Naive thymus-derived CD4-positive, alpha-beta T cell (primary cell): ENCODE measurements at regions of chr16 and their contacts with region 1.

Region 1: GRCh38 chr16:81366316-81366932 is 51.7 kb downstream of the GAN start:
- DNase-seq: peak in 7 of 9 donors; percentile 20 to 62 (median 52)
- ATAC-seq: peak; percentile 86
- H3K4me3 ChIP-seq: no peak overlapping the region
- H3K4me3 Mint-ChIP-seq: no peak overlapping the region
- H3K27ac ChIP-seq: no peak overlapping the region
- H3K27ac Mint-ChIP-seq: no peak overlapping the region
- H3K4me1 ChIP-seq: no peaks in the 10 kb centered on the region
- H3K4me1 Mint-ChIP-seq: peaks cover 0 to 3% (median 0%) of the 10 kb centered on the region in 7 donors
- H3K27me3 ChIP-seq: no peaks in the 10 kb centered on the region
- H3K27me3 Mint-ChIP-seq: no peaks in the 10 kb centered on the region

Region 2: GRCh38 chr16:80500526-80500925 is 865.9 kb before region 1 on chr16:
- CTCF ChIA-PET with region 1: no interaction called
- POLR2A ChIA-PET with region 1: no interaction called
- intact Hi-C with region 1: no loop called
- DNase-seq: no peak
- ATAC-seq: no peak
- H3K4me3 ChIP-seq: no peak overlapping the region
- H3K4me3 Mint-ChIP-seq: no peak overlapping the region
- H3K27ac ChIP-seq: no peak overlapping the region
- H3K27ac Mint-ChIP-seq: no peak overlapping the region
- H3K4me1 ChIP-seq: no peaks in the 10 kb centered on the region
- H3K4me1 Mint-ChIP-seq: peaks cover 0 to 9% (median 3%) of the 10 kb centered on the region in 7 donors
- H3K27me3 ChIP-seq: no peaks in the 10 kb centered on the region
- H3K27me3 Mint-ChIP-seq: peaks cover 0 to 14% (median 0%) of the 10 kb centered on the region in 5 donors

Region 3: DNA sequence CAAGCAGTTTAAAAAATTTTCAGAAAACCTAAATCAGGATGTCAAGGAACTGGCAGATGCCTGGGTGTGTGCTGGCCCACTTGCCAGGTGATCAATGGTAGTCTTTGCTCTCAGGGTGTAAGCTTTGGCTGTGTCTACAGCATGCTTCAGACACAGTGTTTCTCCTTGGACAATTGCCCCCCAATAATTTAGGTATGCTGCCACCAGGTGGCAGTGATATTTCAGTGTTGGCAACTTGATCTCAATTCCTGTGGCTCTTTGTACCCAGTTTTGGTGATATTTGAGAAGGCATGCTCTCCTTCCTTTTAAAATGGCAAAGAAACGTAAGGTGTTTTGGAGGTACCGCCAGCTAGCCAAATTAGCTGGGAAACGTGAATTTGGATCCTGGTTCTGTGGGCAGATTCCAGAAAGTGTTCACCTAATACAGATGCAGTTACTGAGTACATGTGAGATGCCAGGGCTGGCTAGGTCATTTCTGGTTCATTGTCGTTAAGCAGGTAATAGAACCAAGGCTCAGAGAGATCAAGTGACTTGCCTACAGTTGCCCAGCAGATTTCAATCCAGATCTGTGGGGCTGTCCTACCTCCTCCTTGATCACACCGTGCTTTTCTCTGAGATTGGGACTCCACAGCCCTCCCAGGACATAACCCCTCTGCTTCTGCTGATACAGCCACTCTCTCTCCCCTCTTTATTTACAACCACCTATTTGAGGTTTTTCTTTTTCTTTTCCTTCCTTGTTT is 257.1 kb after region 1 on chr16:
- CTCF ChIA-PET with region 1: interaction called, 3 read pairs
- POLR2A ChIA-PET with region 1: no interaction called
- intact Hi-C with region 1: loop called in 1 of 2 experiments (anchors 1 kb)
- DNase-seq: peak in 7 of 9 donors; percentile 10 to 58 (median 39)
- ATAC-seq: peak; percentile 65
- H3K4me3 ChIP-seq: no peak overlapping the region
- H3K4me3 Mint-ChIP-seq: no peak overlapping the region
- H3K27ac ChIP-seq: no peak overlapping the region
- H3K27ac Mint-ChIP-seq: peak overlapping the region in 4 of 9 donors; percentile 1 to 54 (median 18)
- H3K4me1 ChIP-seq: no peaks in the 10 kb centered on the region
- H3K4me1 Mint-ChIP-seq: peaks cover 0 to 25% (median 0%) of the 10 kb centered on the region in 7 donors
- H3K27me3 ChIP-seq: no peaks in the 10 kb centered on the region
- H3K27me3 Mint-ChIP-seq: no peaks in the 10 kb centered on the region

Region 4: DNA sequence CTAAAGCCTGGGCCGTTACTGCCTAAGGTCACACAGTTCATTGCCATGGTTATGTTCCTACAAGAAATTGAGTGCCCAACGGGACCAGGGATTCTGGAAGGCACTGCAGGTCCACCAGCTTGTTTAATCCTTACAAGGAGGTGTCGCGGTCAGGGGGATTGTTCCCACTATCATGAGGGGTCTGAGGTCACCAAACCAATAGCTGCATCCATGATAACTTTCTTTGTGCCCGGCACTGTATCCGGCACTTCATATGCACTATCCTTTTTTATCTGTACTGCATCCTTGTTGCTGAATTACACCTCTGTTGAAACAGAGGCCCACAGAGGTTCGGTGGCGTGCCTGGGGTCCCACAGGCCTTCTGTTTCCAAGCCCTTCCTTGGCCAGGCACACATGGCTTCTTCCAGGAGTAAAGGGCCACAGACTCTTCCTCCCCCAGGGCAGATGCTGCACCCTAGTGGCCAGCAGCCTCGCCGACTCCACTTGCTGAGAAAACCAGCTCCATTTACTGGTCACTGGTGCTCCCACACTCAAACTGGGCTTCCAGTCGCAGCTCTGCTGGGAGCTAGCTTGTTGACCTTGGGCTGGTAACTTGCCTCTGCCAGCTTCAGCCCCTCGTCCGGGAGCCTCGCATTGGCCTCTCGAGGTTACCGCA is 330.7 kb after region 1 on chr16:
- CTCF ChIA-PET with region 1: interaction called, 8 read pairs
- POLR2A ChIA-PET with region 1: no interaction called
- intact Hi-C with region 1: loop called in 1 of 2 experiments (anchors 1 kb)
- DNase-seq: peak in 5 of 9 donors; percentile 31 to 57 (median 32)
- ATAC-seq: peak; percentile 61
- H3K4me3 ChIP-seq: no peak overlapping the region
- H3K4me3 Mint-ChIP-seq: no peak overlapping the region
- H3K27ac ChIP-seq: no peak overlapping the region
- H3K27ac Mint-ChIP-seq: peak overlapping the region in 1 of 9 donors; percentile 19
- H3K4me1 ChIP-seq: no peaks in the 10 kb centered on the region
- H3K4me1 Mint-ChIP-seq: peaks cover 0 to 16% (median 0%) of the 10 kb centered on the region in 7 donors
- H3K27me3 ChIP-seq: no peaks in the 10 kb centered on the region
- H3K27me3 Mint-ChIP-seq: no peaks in the 10 kb centered on the region

Region 5: DNA sequence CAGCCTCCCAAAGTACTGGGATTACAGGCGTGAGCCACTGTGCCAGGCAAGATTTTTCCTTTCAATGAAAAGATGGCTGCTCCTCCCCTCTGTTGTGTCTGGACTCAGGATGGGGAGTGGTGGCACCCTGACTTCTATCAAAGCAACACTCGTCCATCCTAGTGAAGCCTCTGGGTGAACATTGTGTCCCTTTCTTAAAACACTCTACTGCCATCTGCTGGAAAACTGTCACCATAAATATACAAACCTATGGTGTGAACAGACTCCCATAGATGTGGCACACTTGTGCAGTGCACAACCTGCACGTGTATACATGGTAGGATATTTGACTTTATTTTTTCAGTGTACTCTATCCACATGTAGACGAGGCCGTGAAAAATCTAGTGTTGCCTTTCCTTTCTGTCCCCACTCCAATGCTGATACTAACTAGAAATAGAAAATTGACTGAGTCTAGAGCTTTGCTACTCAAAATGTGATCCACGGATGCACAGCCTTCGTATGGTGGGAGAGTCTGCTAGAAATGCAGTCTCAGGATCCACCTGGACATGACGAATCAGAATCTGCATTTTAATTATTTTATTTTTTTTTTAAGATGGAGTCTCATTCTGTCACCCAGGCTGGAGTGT is 356.8 kb after region 1 on chr16:
- CTCF ChIA-PET with region 1: interaction called, 12 read pairs
- POLR2A ChIA-PET with region 1: no interaction called
- intact Hi-C with region 1: loop called (anchors 1 kb)
- DNase-seq: peak in 7 of 9 donors; percentile 51 to 72 (median 69)
- ATAC-seq: peak; percentile 86
- H3K4me3 ChIP-seq: no peak overlapping the region
- H3K4me3 Mint-ChIP-seq: no peak overlapping the region
- H3K27ac ChIP-seq: no peak overlapping the region
- H3K27ac Mint-ChIP-seq: peak overlapping the region in 2 of 9 donors; percentile 19 to 67
- H3K4me1 ChIP-seq: no peaks in the 10 kb centered on the region
- H3K4me1 Mint-ChIP-seq: peaks cover 6 to 21% (median 12%) of the 10 kb centered on the region in 7 donors
- H3K27me3 ChIP-seq: no peaks in the 10 kb centered on the region
- H3K27me3 Mint-ChIP-seq: peaks cover 0 to 4% (median 0%) of the 10 kb centered on the region in 5 donors

Region 6: GRCh38 chr16:81730090-81731051 is 363.9 kb after region 1 on chr16:
- CTCF ChIA-PET with region 1: interaction called, 10 read pairs
- POLR2A ChIA-PET with region 1: no interaction called
- intact Hi-C with region 1: no loop called
- DNase-seq: peak; percentile 31 to 65 (median 57)
- ATAC-seq: peak; percentile 89
- H3K4me3 ChIP-seq: peak overlapping the region; percentile 56
- H3K4me3 Mint-ChIP-seq: peak overlapping the region; percentile 80 to 91 (median 85)
- H3K27ac ChIP-seq: peak overlapping the region; percentile 76
- H3K27ac Mint-ChIP-seq: peak overlapping the region; percentile 82 to 93 (median 88)
- H3K4me1 ChIP-seq: peaks cover 3 to 8% of the 10 kb centered on the region in 2 donors
- H3K4me1 Mint-ChIP-seq: peaks cover 12 to 18% (median 17%) of the 10 kb centered on the region in 7 donors
- H3K27me3 ChIP-seq: no peaks in the 10 kb centered on the region
- H3K27me3 Mint-ChIP-seq: peaks cover 0 to 8% (median 0%) of the 10 kb centered on the region in 5 donors

Region 7: DNA sequence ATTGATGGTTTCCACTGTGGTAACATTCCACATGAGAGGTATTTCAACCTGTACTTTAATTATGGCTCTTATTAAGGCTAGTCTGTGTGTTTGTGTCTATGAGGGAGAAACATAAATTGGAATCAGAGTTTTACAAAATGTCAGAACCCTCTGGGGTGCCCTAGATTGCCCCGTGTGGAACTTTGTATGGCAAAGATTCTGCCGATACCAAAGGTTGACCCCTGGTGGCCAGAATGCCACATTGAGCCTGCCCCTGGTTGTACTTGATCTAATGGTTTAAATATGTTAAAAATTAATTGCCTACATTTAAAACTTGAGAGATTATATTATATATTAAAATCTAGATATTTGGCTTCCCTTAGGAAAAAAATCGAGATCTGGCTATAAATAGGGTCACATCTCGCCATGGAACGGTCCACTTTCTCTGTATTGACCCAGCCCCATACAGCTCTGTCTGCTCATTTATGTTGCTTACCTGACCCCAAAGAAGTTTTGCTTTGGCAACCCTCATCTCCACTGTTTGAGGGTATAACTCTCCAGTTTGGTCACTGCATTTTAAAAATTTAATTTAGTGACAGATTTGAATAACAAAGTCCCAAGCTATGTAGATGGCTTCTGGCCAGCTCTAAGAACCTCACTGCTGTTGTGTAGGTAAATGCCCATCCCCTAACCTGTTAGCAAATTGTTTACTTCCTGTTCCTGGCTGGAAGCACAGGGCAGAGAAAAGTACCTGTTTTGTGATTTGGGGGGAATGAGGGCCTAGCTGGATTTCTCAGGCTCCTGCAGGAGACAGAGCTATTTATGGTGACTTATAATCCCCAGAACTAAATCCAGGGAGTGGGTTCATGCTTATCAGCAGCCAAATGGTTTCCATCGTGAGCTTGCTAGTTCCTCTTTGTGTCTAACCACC is 507.7 kb after region 1 on chr16:
- CTCF ChIA-PET with region 1: no interaction called
- POLR2A ChIA-PET with region 1: no interaction called
- intact Hi-C with region 1: loop called in 1 of 2 experiments (anchors 5 kb)
- DNase-seq: peak in 5 of 9 donors; percentile 5 to 47 (median 17)
- ATAC-seq: peak; percentile 82
- H3K4me3 ChIP-seq: no peak overlapping the region
- H3K4me3 Mint-ChIP-seq: no peak overlapping the region
- H3K27ac ChIP-seq: no peak overlapping the region
- H3K27ac Mint-ChIP-seq: no peak overlapping the region
- H3K4me1 ChIP-seq: peaks cover 0 to 6% of the 10 kb centered on the region in 2 donors
- H3K4me1 Mint-ChIP-seq: peaks cover 0 to 14% (median 3%) of the 10 kb centered on the region in 7 donors
- H3K27me3 ChIP-seq: no peaks in the 10 kb centered on the region
- H3K27me3 Mint-ChIP-seq: peaks cover 0 to 6% (median 0%) of the 10 kb centered on the region in 5 donors

Region 8: DNA sequence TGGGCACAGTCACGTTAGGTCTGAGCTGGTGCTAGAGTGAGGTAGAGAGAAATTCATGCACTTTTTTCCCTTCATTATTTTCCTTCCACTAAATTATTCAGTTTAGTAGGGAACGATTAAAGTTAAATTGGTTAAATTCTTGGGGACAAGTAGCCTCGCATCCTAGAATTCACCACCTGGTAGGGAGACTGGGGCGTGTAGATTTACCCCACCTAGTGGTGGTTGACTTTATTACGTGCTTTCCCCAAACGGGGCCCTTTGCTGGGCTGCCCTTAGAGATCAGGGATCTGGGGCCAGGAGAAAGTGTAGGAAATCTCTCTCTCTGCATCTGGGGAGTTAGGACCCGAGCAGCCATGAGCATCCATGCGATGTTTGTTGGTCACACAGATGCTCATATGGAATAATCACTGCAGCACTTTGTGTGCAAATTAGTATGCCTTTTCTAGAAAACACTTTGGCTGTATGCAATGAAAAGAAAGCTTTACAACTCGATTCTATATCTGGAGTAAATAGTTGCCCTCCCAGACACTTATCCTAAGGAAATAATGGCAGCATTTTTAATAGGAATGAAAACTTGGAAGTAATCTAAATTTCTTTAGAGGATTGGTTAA is 519.7 kb after region 1 on chr16:
- CTCF ChIA-PET with region 1: interaction called, 3 read pairs
- POLR2A ChIA-PET with region 1: no interaction called
- intact Hi-C with region 1: loop called (anchors 2 to 5 kb)
- DNase-seq: peak in 4 of 9 donors; percentile 13 to 30 (median 18)
- ATAC-seq: peak; percentile 67
- H3K4me3 ChIP-seq: no peak overlapping the region
- H3K4me3 Mint-ChIP-seq: no peak overlapping the region
- H3K27ac ChIP-seq: no peak overlapping the region
- H3K27ac Mint-ChIP-seq: no peak overlapping the region
- H3K4me1 ChIP-seq: no peaks in the 10 kb centered on the region
- H3K4me1 Mint-ChIP-seq: peaks cover 0 to 1% (median 0%) of the 10 kb centered on the region in 7 donors
- H3K27me3 ChIP-seq: no peaks in the 10 kb centered on the region
- H3K27me3 Mint-ChIP-seq: no peaks in the 10 kb centered on the region